ENCODE measurements at regions of chr4 and their contacts with region 1.

Region 1: DNA sequence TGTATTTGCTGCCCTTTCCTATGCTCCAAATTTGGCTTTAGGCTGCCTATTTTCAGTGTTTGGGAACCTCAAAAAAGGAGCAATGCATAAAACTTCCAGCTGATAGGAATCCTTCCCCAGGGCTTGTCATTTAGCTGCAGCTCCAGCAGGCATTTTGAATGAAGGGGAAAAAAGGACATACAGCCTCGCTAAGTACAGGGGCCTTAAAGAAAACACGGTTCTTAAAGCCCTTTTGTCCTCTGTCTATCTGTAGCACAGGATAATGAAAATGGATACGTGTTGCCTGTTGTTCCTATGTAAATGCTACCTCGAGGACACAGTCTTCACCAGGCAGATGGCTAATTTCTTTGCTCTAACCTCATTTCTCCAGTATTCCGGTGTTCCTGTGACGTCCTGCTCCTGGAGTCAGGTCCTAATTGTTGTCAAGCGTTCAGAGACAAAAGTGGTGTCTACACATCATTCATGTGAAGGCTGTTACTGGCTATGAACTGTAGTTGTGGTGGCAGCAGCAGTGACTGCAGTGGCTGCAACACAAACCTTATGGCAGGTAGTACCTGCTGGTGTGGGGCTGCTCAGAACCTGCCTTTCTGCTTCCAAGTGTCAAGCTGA is 117.4 kb downstream of the MGST2 start:
- DNase-seq: no peak
- ATAC-seq: no peak
- H3K4me3 ChIP-seq: no peak overlapping the region
- H3K27ac ChIP-seq: no peak overlapping the region
- H3K4me1 ChIP-seq: no peaks in the 10 kb centered on the region
- H3K27me3 ChIP-seq: peaks cover 0 to 2% of the 10 kb centered on the region in 2 experiments; a peak in 2 of 4 replicates
- CTCF ChIP-seq: no peak
- EP300 ChIP-seq: no peak
- POLR2A ChIP-seq: no peak
- RAD21 ChIP-seq: no peak

Region 2: GRCh38 chr4:139761461-139761860 is 21.6 kb before region 1 on chr4:
- CTCF ChIA-PET with region 1: no interaction called
- POLR2A ChIA-PET with region 1: no interaction called
- RAD21 ChIA-PET with region 1: no interaction called
- SMC1A ChIA-PET with region 1: no interaction called
- in situ Hi-C with region 1: no loop called
- intact Hi-C with region 1: no loop called
- DNase-seq: no peak
- ATAC-seq: peak; percentile 73
- H3K4me3 ChIP-seq: no peak overlapping the region
- H3K27ac ChIP-seq: no peak overlapping the region
- H3K4me1 ChIP-seq: no peaks in the 10 kb centered on the region
- H3K27me3 ChIP-seq: peaks cover 1 to 2% of the 10 kb centered on the region in 2 experiments; a peak in 2 of 4 replicates
- CTCF ChIP-seq: peak in 2 of 3 experiments; percentile 25 to 35; a peak in 2 of 6 replicates
- EP300 ChIP-seq: no peak
- POLR2A ChIP-seq: no peak
- RAD21 ChIP-seq: peak; percentile 31

Region 3: DNA sequence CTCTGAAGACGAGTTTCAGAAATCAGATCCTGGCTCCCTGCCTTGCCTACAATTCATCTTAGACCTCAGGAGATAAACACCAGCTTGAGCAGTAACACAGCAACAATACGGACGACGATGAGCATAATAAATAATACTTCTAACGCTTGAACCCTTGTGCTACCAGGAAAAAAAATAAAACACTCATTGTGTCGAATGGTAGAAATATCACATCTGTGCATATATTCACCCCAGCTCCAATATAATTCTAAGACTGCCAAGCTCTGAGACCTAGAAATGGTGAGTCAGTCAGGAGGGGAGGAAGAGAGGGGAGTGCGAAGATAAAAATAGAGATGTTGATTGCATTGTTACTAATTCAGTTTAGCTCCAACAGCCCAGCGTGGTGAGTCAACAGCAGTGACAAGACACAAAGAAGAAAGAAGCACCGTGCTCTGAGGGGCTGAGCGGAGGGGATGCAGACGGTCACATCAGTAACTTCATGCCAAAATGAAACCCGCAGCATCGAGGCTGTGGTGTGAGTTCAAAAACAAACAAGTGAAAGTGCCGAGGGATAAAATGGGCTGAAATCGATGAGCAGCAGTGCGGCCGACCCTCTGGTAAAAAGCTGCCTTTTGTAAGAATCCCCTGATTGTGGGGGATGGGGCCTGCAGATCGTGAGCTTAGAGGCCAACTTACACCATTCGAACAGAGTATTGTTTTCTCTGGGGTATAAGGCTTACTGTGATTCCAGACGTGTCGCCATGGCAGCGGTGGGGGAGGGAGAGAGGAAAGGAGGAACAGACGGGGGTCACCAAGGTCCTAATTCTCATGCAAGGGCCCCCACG is 33.0 kb after region 1 on chr4:
- CTCF ChIA-PET with region 1: no interaction called
- POLR2A ChIA-PET with region 1: no interaction called
- RAD21 ChIA-PET with region 1: no interaction called
- SMC1A ChIA-PET with region 1: no interaction called
- in situ Hi-C with region 1: no loop called
- intact Hi-C with region 1: loop called (anchors 1 kb)
- DNase-seq: no peak
- ATAC-seq: no peak
- H3K4me3 ChIP-seq: no peak overlapping the region
- H3K27ac ChIP-seq: no peak overlapping the region
- H3K4me1 ChIP-seq: no peaks in the 10 kb centered on the region
- H3K27me3 ChIP-seq: no peaks in the 10 kb centered on the region; a peak in 2 of 4 replicates
- CTCF ChIP-seq: no peak
- EP300 ChIP-seq: no peak
- POLR2A ChIP-seq: no peak
- RAD21 ChIP-seq: no peak

Region 4: GRCh38 chr4:139913398-139913990 is 130.5 kb after region 1 on chr4:
- CTCF ChIA-PET with region 1: no interaction called
- POLR2A ChIA-PET with region 1: no interaction called
- RAD21 ChIA-PET with region 1: no interaction called
- SMC1A ChIA-PET with region 1: no interaction called
- in situ Hi-C with region 1: no loop called
- intact Hi-C with region 1: no loop called
- DNase-seq: no peak
- ATAC-seq: no peak
- H3K4me3 ChIP-seq: no peak overlapping the region
- H3K27ac ChIP-seq: no peak overlapping the region
- H3K4me1 ChIP-seq: no peaks in the 10 kb centered on the region
- H3K27me3 ChIP-seq: peaks cover 0 to 5% of the 10 kb centered on the region in 2 experiments; a peak in 3 of 4 replicates
- CTCF ChIP-seq: no peak
- EP300 ChIP-seq: no peak
- POLR2A ChIP-seq: no peak
- RAD21 ChIP-seq: no peak

Region 5: GRCh38 chr4:139978692-139979091 is 195.7 kb after region 1 on chr4:
- CTCF ChIA-PET with region 1: no interaction called
- POLR2A ChIA-PET with region 1: no interaction called
- RAD21 ChIA-PET with region 1: no interaction called
- SMC1A ChIA-PET with region 1: no interaction called
- in situ Hi-C with region 1: no loop called
- intact Hi-C with region 1: no loop called
- DNase-seq: peak; percentile 75
- ATAC-seq: peak; percentile 90
- H3K4me3 ChIP-seq: no peak overlapping the region
- H3K27ac ChIP-seq: peak overlapping the region; percentile 40; the same call in 1 of the 2 replicates
- H3K4me1 ChIP-seq: peaks cover 46% of the 10 kb centered on the region
- H3K27me3 ChIP-seq: no peaks in the 10 kb centered on the region
- CTCF ChIP-seq: no peak
- EP300 ChIP-seq: peak; percentile 44 to 74; a peak in 3 of 4 replicates
- POLR2A ChIP-seq: no peak
- RAD21 ChIP-seq: no peak

Measured in GM12878 (cell line).